Activated naive CD4-positive, alpha-beta T cell treated with anti-CD3 and anti-CD28 coated beads for 36 hours (primary cell): ENCODE measurements at regions of chr10 and their contacts with region 1.

Region 1: GRCh38 chr10:24518981-24519597 is 204.6 kb downstream of the ARHGAP21 start:
- DNase-seq: peak; percentile 62
- H3K4me3 Mint-ChIP-seq: no peak overlapping the region
- H3K27ac Mint-ChIP-seq: no peak overlapping the region
- H3K4me1 Mint-ChIP-seq: peaks cover 14% of the 10 kb centered on the region
- H3K27me3 Mint-ChIP-seq: peaks cover 7% of the 10 kb centered on the region

Region 2: DNA sequence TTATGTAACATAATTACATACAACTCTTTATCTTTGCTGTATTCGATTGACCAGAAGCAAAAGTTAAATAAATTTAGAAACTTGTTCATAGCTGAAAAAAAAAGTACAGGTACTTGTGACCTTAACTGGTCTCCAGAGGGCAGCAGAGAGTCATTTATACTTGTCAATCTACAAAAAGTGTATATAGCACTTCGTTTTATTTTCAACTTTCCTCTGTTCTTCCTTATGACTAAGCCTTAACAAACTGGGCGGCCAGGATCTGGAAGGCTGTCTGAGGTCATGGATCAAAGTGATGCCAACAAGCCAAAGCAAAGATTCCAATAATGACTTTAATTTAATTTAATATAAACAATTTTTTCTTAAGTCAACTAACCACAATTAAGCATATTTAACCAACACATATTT is 1204.3 kb before region 1 on chr10:
- CTCF ChIA-PET with region 1: no interaction called
- intact Hi-C with region 1: loop called (anchors 10 kb)
- DNase-seq: peak; percentile 71
- H3K4me3 Mint-ChIP-seq: no peak overlapping the region
- H3K27ac Mint-ChIP-seq: no peak overlapping the region
- H3K4me1 Mint-ChIP-seq: peaks cover 4% of the 10 kb centered on the region
- H3K27me3 Mint-ChIP-seq: no peaks in the 10 kb centered on the region

Region 3: GRCh38 chr10:23525406-23525805 is 993.7 kb before region 1 on chr10:
- CTCF ChIA-PET with region 1: no interaction called
- intact Hi-C with region 1: loop called (anchors 5 kb)
- DNase-seq: peak; percentile 29
- H3K4me3 Mint-ChIP-seq: no peak overlapping the region
- H3K27ac Mint-ChIP-seq: no peak overlapping the region
- H3K4me1 Mint-ChIP-seq: peaks cover 13% of the 10 kb centered on the region
- H3K27me3 Mint-ChIP-seq: no peaks in the 10 kb centered on the region

Region 4: DNA sequence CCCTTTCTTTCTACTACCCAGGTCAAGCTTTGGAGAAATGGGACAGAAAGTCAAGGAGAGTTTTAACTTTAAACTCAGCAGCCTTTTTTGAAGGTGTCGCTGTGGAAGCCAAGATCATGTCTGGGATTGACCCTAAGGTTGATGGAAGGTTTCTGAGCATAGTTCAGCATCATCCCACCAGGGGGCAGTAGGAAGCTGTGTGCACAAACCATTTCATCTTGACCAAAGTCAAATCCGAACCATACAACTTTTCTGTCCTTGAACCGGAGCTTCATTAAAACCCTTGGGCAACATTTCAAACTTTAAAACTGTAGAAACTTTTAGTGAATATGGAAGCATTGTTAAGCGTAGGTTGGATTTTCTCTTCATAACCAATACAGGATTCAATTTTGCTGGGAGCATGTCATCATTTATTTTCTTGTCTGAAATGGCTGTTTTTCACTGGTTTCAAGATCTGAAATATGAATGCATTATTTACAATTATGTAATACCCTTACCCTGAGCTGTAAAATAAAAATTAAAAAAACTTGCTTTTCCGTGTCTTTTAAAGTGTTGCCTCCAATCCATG is 524.5 kb before region 1 on chr10:
- CTCF ChIA-PET with region 1: interaction called, 7 read pairs
- intact Hi-C with region 1: loop called (anchors 1 kb)
- DNase-seq: peak; percentile 63
- H3K4me3 Mint-ChIP-seq: no peak overlapping the region
- H3K27ac Mint-ChIP-seq: no peak overlapping the region
- H3K4me1 Mint-ChIP-seq: no peaks in the 10 kb centered on the region
- H3K27me3 Mint-ChIP-seq: peaks cover 5% of the 10 kb centered on the region

Region 5: GRCh38 chr10:24360282-24361127 is 158.6 kb before region 1 on chr10:
- CTCF ChIA-PET with region 1: interaction called, 4 read pairs
- intact Hi-C with region 1: loop called (anchors 5 kb)
- DNase-seq: peak; percentile 74
- H3K4me3 Mint-ChIP-seq: no peak overlapping the region
- H3K27ac Mint-ChIP-seq: no peak overlapping the region
- H3K4me1 Mint-ChIP-seq: no peaks in the 10 kb centered on the region
- H3K27me3 Mint-ChIP-seq: peaks cover 4% of the 10 kb centered on the region

Region 6: GRCh38 chr10:24503461-24504320 is 15.4 kb before region 1 on chr10:
- CTCF ChIA-PET with region 1: interaction called, 24 read pairs
- intact Hi-C with region 1: no loop called
- DNase-seq: peak; percentile 58
- H3K4me3 Mint-ChIP-seq: no peak overlapping the region
- H3K27ac Mint-ChIP-seq: no peak overlapping the region
- H3K4me1 Mint-ChIP-seq: no peaks in the 10 kb centered on the region
- H3K27me3 Mint-ChIP-seq: peaks cover 14% of the 10 kb centered on the region

Region 7: DNA sequence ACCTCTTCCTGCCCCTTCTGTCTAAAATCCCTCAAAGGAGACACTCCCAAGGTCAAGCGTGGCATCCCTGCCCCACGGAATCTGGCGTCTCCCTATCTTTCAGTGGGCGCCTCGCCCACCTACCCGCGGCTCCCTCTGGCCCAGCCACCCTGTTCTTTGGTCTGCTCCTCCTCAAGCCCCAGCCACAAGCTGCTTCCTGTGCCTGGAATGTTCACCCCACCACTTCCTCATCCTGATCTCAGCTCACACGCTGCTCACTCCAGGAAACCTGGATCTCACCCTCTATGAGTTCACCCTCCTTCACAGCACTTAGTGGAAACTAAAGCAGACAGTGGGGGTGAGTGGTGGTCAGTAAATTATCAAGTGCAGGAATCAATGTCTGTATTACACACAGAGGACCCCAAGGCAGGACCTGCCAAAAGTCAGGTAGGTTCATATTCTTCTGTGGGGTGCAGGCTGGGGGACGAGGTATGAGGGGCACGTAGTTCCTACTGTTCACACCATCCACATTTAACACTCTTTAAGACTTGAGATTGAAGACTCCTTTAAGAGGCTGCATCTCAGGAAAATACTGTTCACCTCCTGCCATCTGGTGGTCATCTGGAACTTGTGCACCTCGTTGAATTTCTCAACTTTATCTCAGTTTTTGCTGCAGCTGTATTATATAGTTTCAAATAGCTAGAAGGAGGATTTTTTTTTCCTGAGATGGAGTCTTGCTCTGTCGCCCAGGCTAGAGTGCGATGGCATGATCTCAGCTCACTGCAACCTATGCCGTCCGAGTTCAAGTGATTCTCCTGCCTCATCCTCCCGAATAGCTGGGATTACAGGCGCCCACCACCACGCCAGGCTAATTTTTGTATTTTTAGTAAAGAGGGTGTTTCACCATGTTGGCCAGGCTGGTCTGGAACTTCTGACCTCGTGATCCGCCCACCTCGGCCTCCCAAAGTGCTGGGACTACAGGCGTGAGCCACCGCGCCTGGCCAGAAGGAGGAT is 38.0 kb after region 1 on chr10:
- CTCF ChIA-PET with region 1: interaction called, 7 read pairs
- intact Hi-C with region 1: loop called (anchors 2 kb)
- DNase-seq: peak; percentile 41
- H3K4me3 Mint-ChIP-seq: no peak overlapping the region
- H3K27ac Mint-ChIP-seq: no peak overlapping the region
- H3K4me1 Mint-ChIP-seq: peaks cover 6% of the 10 kb centered on the region
- H3K27me3 Mint-ChIP-seq: no peaks in the 10 kb centered on the region

Region 8: DNA sequence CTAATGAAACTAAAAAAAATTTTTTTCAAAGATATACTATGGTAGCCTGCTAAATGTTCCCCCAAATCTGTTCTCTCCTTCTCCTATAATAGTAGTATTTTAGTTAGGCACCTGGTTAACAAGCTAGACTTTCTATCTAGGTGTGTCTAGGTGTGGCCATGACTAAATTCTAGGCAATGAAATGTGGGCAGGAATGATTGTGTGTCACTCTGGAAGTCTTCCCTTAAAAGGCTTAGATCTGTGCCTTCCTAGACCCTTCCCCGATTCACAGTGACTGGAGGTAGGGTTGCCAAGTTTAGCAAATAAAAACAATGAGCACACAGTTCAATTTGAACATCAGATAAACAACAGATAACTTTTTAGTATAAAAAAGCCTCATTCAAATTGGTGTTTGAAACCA is 212.9 kb after region 1 on chr10:
- CTCF ChIA-PET with region 1: no interaction called
- intact Hi-C with region 1: no loop called
- DNase-seq: no peak
- H3K4me3 Mint-ChIP-seq: no peak overlapping the region
- H3K27ac Mint-ChIP-seq: no peak overlapping the region
- H3K4me1 Mint-ChIP-seq: no peaks in the 10 kb centered on the region
- H3K27me3 Mint-ChIP-seq: no peaks in the 10 kb centered on the region